Activated naive CD4-positive, alpha-beta T cell treated with anti-CD3 and anti-CD28 coated beads, Interleukin-2, amount 10 ng/mL, durations not matched to agents 7 days and 5 days (primary cell): ENCODE measurements at regions of chr1 and their contacts with region 1.

Region 1: DNA sequence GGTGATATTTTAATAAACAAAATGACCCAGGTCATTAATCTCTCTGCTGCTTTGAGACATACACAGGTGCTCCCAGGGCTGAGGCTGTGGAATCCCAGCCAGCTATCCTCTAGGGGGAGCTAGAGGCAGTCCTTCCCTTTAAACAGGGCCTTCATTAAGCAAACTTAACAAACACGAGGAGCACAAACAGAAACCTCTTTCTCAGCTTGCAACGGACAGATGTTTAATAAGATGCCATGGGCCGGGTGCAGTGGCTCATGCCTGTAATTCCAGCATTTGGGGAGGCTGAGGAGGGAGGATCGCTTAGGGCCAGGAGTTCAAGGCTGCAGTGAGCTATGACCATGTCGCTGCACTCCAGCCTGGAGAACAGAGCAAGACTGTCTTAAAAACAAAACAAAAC is 106.7 kb downstream of the HIVEP3 start:
- DNase-seq: peak; percentile 75
- H3K4me3 Mint-ChIP-seq: no peak overlapping the region
- H3K27ac Mint-ChIP-seq: no peak overlapping the region
- H3K4me1 Mint-ChIP-seq: peaks cover 43% of the 10 kb centered on the region
- H3K27me3 Mint-ChIP-seq: peaks cover 4% of the 10 kb centered on the region

Region 2: DNA sequence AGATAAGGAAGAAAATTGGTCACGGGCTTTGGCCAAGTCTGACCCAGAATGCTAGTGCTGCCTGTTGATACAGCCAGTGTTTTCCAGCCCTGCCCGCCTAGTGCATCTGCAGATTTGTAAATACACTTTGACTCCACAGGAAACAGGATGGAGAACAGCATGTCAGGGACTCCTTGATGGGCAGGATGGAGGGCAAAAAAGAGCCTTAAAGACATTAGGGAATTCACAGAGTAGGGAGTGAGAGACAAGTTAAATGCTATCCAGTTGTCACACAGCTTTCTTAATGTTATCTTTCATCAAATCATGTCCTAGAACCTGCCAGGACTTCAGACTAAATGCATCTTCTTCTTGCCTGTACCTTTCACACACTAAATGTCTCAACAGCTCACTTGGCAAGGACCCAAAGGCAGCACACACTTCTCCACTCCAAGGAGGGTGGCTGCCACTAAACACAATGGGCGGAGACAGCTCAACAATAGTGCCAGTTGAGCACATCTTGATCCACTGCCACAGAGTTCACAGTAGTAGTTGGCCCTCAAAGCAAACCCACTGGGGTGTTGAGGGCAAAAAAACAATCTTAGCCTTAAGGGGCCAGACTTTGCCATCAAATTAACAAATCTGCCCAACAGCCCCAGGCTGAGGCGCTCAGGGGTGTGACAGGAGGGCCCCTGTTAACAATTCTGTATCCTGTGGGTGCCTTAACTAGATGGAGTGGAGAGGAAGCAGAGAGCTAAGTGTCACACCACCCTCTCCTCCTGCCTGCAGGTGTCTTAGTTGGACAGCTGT is 103.9 kb after region 1 on chr1:
- CTCF ChIA-PET with region 1: interaction called, 11 read pairs
- DNase-seq: peak; percentile 50
- H3K4me3 Mint-ChIP-seq: peak overlapping the region; percentile 87
- H3K27ac Mint-ChIP-seq: peak overlapping the region; percentile 92
- H3K4me1 Mint-ChIP-seq: peaks cover 89% of the 10 kb centered on the region
- H3K27me3 Mint-ChIP-seq: no peaks in the 10 kb centered on the region